Lower lobe of right lung (tissue), 2 donors: ENCODE measurements at regions of chr10 and their contacts with region 1.

Region 1: DNA sequence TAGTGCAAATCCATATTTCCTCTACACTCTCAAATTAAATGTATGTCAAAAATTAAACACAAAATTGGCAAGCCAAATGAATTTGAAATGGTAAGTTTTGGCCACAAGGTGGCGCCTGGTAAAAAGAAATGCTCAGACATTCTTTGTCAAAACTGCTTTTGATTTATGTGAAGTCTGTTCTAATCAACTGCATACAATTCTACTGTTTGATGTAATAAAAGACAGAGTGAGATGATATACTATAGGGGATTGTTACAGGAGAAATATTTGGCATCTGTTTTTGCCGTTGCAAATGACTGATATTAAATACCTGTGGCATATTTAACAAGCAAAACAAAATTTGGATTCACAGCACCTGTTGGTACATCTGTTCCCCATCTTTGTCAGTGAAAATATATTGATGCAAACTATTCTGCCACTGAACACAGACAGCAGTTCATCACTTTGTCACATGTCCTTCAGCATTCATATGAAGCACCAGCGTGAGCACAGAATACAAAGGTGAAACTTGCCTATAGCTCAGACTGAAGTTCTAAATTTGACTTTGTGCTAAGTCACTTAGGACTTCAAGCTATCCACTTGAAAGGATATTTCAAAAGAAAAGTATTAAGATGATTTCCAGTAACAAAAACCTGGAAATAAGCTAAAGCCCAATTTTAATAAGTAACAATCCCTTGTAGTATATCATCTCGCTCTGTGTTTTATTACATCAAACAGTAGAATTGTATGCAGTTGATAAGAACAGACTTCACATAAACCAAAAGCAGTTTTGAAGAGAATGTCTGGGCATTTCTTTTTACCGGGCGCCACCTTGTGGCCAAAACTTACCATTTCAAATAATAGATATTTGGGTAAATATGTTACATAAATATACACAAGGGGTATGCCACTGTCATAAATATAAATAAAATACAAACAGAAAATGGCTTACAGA is 10.2 kb upstream of the CH25H start:
- DNase-seq: peak; percentile 54
- ATAC-seq: peak; percentile 38 to 57
- H3K4me3 ChIP-seq: no peak overlapping the region
- H3K27ac ChIP-seq: no peak overlapping the region
- H3K4me1 ChIP-seq: peaks cover 11% of the 10 kb centered on the region
- H3K27me3 ChIP-seq: no peaks in the 10 kb centered on the region
- CTCF ChIP-seq: peak; percentile 79

Region 2: GRCh38 chr10:88835096-88835909 is 382.0 kb before region 1 on chr10:
- intact Hi-C with region 1: loop called (anchors 10 kb)
- DNase-seq: peak; percentile 84
- ATAC-seq: peak; percentile 94 to 96
- H3K4me3 ChIP-seq: no peak overlapping the region
- H3K27ac ChIP-seq: no peak overlapping the region
- H3K4me1 ChIP-seq: no peaks in the 10 kb centered on the region
- H3K27me3 ChIP-seq: no peaks in the 10 kb centered on the region
- CTCF ChIP-seq: peak; percentile 93

Region 3: GRCh38 chr10:88932539-88933256 is 284.6 kb before region 1 on chr10:
- intact Hi-C with region 1: loop called (anchors 10 kb)
- DNase-seq: no peak
- ATAC-seq: peak; percentile 88
- H3K4me3 ChIP-seq: no peak overlapping the region
- H3K27ac ChIP-seq: peak overlapping the region; percentile 37
- H3K4me1 ChIP-seq: peaks cover 24% of the 10 kb centered on the region
- H3K27me3 ChIP-seq: no peaks in the 10 kb centered on the region
- CTCF ChIP-seq: peak; percentile 86

Region 4: GRCh38 chr10:89029785-89030437 is 187.4 kb before region 1 on chr10:
- intact Hi-C with region 1: loop called (anchors 10 kb)
- DNase-seq: peak; percentile 77
- ATAC-seq: peak; percentile 75 to 76
- H3K4me3 ChIP-seq: no peak overlapping the region
- H3K27ac ChIP-seq: no peak overlapping the region
- H3K4me1 ChIP-seq: peaks cover 37% of the 10 kb centered on the region
- H3K27me3 ChIP-seq: no peaks in the 10 kb centered on the region
- CTCF ChIP-seq: peak; percentile 92

Region 5: DNA sequence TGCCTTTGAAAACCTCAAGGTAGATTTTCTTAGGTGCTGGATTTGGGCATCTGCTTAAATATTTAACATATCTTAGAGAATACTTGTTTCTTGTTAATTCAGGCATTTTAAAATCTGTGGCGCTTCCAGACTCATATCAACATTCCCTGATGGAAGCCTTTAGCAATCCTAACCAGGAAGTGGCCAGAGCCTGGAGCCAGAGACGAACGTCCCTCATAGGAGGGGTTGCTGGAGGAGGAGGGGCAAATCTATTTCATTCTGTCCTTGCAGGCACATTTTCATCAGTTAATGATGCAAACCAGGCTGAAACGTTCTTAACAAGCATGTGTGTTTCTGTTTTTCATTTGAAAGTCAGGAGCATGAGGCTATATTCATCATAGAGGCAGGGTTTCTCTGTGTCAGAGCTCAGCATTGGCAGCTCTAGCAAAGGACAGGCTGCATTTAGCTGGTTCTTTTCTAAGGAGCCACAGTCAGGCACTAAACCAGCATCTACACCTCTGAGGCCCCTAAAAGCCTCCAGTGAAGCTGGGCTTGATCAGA is 66.7 kb after region 1 on chr10:
- intact Hi-C with region 1: no loop called
- DNase-seq: no peak
- ATAC-seq: peak; percentile 60 to 80
- H3K4me3 ChIP-seq: no peak overlapping the region
- H3K27ac ChIP-seq: peak overlapping the region; percentile 51
- H3K4me1 ChIP-seq: peaks cover 24% of the 10 kb centered on the region
- H3K27me3 ChIP-seq: no peaks in the 10 kb centered on the region
- CTCF ChIP-seq: no peak